Endothelial cell of umbilical vein (primary cell): ENCODE measurements at regions of chr4 and their contacts with region 1.

Region 1: DNA sequence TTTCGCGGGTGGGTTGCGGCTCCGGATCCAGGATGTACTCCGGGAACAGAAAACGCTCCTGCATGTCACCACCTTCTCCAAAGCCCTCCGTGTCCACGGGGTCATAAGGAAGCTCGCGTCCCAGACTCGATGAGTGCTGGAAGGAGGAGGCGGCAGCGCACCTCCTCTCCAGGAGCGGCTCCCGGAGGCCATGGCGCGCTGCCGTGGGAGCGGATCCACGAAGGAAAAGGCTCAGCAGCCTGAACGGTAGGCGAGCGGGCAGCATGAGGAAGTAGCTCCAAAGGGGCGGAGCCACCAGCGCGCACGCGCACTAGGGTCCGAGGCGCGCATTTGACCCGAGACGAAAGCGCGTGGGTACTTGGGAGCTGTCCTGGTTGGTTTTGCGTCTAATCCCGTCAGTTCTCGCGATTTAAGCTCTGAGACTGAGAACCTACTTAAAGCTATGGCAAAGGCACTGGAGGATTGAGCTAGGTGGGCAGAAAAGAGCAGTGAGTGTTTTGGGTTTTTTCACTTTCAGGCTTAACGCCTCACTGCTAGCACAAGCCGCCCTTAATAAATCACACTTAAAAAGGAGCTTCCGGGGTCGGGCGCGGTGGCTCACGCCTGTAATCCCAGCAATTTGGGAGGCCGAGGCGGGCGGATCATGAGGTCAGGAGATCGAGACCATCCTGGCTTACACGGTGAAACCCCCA is at the start of gene NOA1:
- DNase-seq: peak; percentile 100
- H3K4me3 ChIP-seq: peak within 1 kb of the TSS; percentile 80 to 93 (median 88)
- H3K27ac ChIP-seq: peak within 1 kb of the TSS; percentile 100
- H3K4me1 ChIP-seq: peaks cover 30% of the 10 kb centered on the region
- H3K27me3 ChIP-seq: no peaks in the 10 kb centered on the region
- CTCF ChIP-seq: no peak
- POLR2A ChIP-seq: peak; percentile 76
- total RNA-seq, gene NOA1: 16.1 and 17.1 TPM in 2 replicates

Region 2: GRCh38 chr4:56668298-56668697 is 309.2 kb before region 1 on chr4:
- CTCF ChIA-PET with region 1: no interaction called
- POLR2A ChIA-PET with region 1: no interaction called
- dilution Hi-C with region 1: no loop called
- intact Hi-C with region 1: no loop called
- DNase-seq: no peak
- H3K4me3 ChIP-seq: no peak overlapping the region
- H3K27ac ChIP-seq: no peak overlapping the region
- H3K4me1 ChIP-seq: peaks cover 5% of the 10 kb centered on the region
- H3K27me3 ChIP-seq: no peaks in the 10 kb centered on the region
- CTCF ChIP-seq: peak in 1 of 2 donors; percentile 21
- POLR2A ChIP-seq: no peak

Region 3: DNA sequence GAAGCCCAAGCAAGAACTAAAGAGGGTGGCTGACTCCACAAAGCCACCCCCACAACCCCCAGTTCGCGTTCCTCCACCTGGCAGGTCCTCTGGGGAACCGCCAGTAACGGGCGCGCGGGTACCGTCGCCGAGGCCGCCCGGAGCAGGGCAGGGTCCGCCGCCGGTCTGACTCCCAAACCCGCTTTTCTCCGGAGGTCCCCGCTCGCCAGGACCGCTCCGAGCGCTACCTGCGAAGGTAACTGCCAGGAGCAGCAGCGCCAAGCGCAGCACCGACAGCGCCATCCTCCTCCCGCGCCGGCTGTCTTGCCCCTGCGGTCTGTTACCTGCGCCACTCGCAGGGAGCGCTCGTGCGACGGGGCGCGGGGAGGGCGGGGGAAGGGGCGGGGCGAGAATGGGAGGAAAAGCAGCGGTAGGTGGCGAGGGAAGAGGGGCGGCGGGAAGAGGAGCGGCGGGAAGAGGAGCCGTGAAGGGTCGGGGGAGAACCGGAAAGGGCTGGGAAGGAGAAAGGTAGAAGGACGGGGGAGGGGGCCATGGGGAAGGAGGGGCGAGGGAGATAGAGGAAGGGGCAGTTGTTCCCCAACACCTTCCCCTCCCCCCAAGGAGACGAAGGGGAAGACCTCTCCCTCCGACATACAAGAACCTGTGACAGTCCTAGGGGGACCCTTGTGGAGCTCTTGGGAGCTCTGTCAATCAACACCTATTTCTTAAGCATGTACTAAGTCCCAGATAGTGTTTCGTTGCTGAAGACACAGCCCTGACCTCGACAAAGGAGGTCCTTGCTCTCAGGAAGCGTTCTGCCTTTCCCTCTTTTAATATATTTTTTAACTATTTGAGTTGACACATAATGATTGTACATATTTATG is 155.9 kb before region 1 on chr4 and contains the start of gene SPINK2:
- CTCF ChIA-PET with region 1: no interaction called
- POLR2A ChIA-PET with region 1: no interaction called
- dilution Hi-C with region 1: no loop called
- intact Hi-C with region 1: no loop called
- DNase-seq: no peak
- H3K4me3 ChIP-seq: peak within 1 kb of the TSS in 1 of 3 experiments; percentile 25
- H3K27ac ChIP-seq: no peak within 1 kb of the TSS
- H3K4me1 ChIP-seq: peaks cover 4% of the 10 kb centered on the region
- H3K27me3 ChIP-seq: peaks cover 16 to 20% of the 10 kb centered on the region in 2 experiments
- CTCF ChIP-seq: peak in 1 of 2 donors; percentile 11
- POLR2A ChIP-seq: no peak
- total RNA-seq, gene SPINK2: 0.71 TPM in 1 of 2 replicates, not detected in the other

Region 4: DNA sequence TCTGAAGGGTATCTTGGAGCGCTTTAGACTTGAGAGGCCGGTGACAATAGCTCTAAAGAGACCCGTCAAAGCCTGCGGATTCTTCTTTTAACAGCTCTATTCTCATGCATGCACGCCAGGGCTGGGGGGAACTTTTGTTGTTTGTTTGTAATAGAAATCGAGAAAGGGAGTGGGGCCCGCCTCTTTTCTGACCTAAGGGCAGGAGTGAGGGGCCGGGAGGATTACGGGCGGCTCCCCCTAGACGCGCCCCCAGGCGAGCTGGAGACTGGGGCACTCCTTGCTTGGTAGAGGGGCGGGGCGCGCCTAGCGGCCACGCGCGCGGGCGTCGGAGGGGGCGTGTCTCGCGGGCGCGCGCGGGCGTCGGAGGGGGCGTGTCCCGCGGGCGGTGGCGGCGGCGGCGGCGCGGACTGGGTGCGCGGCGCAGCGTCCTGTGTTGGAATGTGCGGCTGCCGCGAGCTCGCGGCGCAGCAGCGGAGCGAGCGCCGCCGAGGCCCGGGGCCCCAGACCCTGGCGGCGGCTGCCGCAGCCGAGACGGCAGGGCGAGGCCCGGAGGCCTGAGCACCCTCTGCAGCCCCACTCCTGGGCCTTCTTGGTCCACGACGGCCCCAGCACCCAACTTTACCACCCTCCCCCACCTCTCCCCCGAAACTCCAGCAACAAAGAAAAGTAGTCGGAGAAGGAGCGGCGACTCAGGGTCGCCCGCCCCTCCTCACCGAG is 69.8 kb before region 1 on chr4 and contains the start of gene REST:
- CTCF ChIA-PET with region 1: interaction called, 5 read pairs
- POLR2A ChIA-PET with region 1: interaction called, 5 read pairs
- dilution Hi-C with region 1: no loop called
- intact Hi-C with region 1: loop called (anchors 1 kb)
- DNase-seq: peak; percentile 68
- H3K4me3 ChIP-seq: peak within 1 kb of the TSS; percentile 96 to 98 (median 98)
- H3K27ac ChIP-seq: peak within 1 kb of the TSS; percentile 84
- H3K4me1 ChIP-seq: peaks cover 17% of the 10 kb centered on the region
- H3K27me3 ChIP-seq: peaks cover 4 to 6% of the 10 kb centered on the region in 2 experiments
- CTCF ChIP-seq: peak in 1 of 2 donors; percentile 0
- POLR2A ChIP-seq: no peak
- total RNA-seq, gene REST: 45.9 and 48.1 TPM in 2 replicates

Region 5: DNA sequence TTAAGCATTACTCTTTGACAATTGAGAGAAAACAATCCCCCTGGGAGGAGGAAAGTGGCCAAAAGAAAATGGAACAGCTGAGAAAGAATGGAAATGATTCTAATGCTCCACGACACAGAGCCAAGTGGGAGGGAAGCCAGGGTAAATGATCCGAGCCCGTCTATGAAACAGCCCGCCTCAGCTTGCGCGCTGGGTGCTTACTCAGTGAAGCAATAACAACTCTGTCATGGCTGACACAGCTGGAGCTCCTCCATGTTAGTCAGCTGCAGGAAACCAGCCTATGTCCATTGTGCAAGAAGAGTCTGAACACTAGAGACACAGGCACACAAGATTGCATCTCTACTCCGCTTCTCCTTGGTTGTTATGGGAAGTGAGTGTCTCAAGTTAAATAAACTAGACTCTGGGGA is 19.4 kb before region 1 on chr4:
- CTCF ChIA-PET with region 1: interaction called, 17 read pairs
- POLR2A ChIA-PET with region 1: interaction called, 5 read pairs
- dilution Hi-C with region 1: no loop called
- intact Hi-C with region 1: loop called (anchors 2 kb)
- DNase-seq: peak; percentile 97
- H3K4me3 ChIP-seq: no peak overlapping the region
- H3K27ac ChIP-seq: peak overlapping the region; percentile 50
- H3K4me1 ChIP-seq: peaks cover 9% of the 10 kb centered on the region
- H3K27me3 ChIP-seq: no peaks in the 10 kb centered on the region
- CTCF ChIP-seq: no peak
- POLR2A ChIP-seq: no peak

Region 6: DNA sequence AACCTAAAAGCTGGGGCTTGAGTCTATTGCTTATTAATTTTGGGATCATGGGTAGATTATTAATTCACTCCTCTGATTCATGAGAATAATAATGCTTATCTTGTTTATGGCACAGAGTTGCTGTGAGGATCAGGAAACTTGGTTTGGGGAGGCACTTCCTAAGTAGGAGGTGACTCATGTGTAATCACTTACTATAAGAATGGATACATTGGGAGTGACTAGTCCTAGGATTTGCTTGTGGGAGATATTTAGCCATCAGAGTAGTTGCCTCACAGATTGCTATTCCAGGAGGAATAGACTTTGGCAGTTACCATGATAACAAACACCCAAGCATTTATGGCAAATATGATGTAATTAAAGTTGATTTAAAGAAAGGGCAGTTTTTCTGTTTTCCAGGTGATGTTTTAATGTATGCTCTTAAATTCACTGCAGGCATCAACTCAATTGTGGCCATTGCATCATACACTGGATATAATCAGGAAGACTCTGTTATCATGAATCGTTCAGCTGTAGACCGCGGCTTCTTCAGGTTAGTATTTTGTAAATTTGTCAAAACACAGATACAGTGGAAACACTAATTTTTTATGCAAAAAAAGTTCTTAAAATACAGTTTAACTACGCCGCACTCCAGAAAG is 43.1 kb after region 1 on chr4:
- CTCF ChIA-PET with region 1: no interaction called
- POLR2A ChIA-PET with region 1: interaction called, 4 read pairs
- dilution Hi-C with region 1: no loop called
- intact Hi-C with region 1: loop called (anchors 1 kb)
- DNase-seq: peak; percentile 93
- H3K4me3 ChIP-seq: peak overlapping the region in 1 of 3 experiments; percentile 5
- H3K27ac ChIP-seq: peak overlapping the region; percentile 91
- H3K4me1 ChIP-seq: peaks cover 42% of the 10 kb centered on the region
- H3K27me3 ChIP-seq: no peaks in the 10 kb centered on the region
- CTCF ChIP-seq: no peak
- POLR2A ChIP-seq: no peak

Region 7: GRCh38 chr4:57303012-57303751 is 325.7 kb after region 1 on chr4:
- CTCF ChIA-PET with region 1: no interaction called
- POLR2A ChIA-PET with region 1: no interaction called
- dilution Hi-C with region 1: no loop called
- intact Hi-C with region 1: no loop called
- DNase-seq: peak; percentile 28
- H3K4me3 ChIP-seq: no peak overlapping the region
- H3K27ac ChIP-seq: no peak overlapping the region
- H3K4me1 ChIP-seq: no peaks in the 10 kb centered on the region
- H3K27me3 ChIP-seq: no peaks in the 10 kb centered on the region
- CTCF ChIP-seq: no peak
- POLR2A ChIP-seq: no peak